ENCODE measurements at regions of chr12 and their contacts with region 1.

Region 1: DNA sequence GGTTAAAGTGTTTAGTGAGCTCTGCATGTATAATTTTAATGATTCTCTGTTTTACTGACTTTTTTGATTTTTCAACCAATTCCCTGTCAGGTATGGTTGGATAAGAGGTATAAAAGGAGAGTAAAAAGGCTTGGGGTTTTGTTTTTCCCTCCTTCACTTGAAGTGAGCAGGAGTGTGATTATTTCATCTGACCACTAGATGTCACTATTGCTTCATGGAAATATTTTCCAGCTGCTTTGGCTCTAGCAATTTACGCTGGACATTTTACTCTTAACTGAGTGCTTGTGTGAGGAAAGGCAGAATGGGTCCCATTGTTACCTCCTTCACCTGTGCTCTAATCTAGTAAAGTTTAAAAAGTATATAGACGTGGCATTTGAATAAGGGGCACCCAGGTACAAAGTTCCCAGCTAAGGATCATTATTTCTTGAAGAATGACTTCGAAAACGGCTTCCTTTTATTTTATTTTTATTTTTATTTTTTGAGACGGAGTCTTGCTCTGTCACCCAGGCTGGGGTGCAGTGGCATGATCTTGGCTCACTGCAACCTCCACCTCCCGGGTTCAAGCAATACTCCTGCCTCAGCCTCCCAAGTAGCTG is 66.5 kb downstream of the TBC1D30 start:
- DNase-seq: no peak
- ATAC-seq: peak; percentile 88

Region 2: DNA sequence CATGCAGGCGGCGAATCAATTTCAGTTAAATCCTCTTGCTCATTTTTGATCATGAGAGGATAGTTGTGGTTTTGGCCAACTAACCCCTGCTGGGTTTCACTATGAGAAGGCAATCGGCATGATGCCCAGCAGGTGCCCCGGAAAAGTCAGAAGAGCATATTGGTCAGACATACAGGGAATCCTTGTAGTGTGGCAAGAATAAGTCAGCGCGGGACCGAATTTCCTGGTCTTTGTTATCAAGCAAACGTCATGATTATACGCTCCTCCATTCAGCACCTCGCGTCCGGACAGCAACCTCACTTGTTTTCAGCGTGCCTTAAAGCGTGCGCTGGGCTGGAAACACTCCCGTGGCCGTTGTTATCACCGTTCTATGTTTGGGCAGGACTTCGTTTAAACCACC is 64.7 kb before region 1 on chr12:
- intact Hi-C with region 1: no loop called
- DNase-seq: peak; percentile 60 to 81
- ATAC-seq: peak; percentile 84

Region 3: DNA sequence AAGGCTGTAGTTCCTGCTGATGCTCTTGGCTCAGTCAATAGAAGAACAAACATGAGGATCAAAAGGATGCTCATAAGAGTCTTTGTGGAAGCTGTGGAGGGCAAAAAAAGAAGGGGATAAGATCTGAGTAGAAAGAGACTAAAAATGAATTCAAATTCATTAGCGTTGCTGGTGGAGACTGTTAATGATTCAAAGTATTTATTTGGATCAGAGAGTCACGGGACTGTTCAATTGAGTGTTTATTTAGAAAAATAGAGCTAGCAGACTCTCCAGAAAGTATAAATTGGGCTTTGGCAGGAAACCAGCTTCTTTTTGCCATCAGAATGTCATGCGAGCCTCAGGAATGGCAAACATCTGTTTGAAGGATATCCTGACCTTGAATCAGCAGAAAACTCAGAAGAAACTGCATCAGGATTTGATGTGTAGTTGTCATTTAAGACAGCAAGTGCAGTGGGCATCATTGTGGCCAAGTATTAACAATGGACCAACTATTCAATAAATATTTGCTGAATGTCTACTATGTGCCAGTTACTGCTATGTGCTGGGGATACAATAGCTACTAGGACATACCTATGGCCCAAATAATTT is 59.8 kb after region 1 on chr12:
- intact Hi-C with region 1: no loop called
- DNase-seq: no peak
- ATAC-seq: no peak

Region 4: GRCh38 chr12:65121049-65121955 is 230.3 kb after region 1 on chr12 and contains the start of gene WIF1:
- intact Hi-C with region 1: loop called in 1 of 2 experiments (anchors 10 kb)
- DNase-seq: peak in 1 of 2 donors; percentile 34
- ATAC-seq: peak; percentile 66
- total RNA-seq, gene WIF1: 0.25 to 0.55 TPM

Region 5: DNA sequence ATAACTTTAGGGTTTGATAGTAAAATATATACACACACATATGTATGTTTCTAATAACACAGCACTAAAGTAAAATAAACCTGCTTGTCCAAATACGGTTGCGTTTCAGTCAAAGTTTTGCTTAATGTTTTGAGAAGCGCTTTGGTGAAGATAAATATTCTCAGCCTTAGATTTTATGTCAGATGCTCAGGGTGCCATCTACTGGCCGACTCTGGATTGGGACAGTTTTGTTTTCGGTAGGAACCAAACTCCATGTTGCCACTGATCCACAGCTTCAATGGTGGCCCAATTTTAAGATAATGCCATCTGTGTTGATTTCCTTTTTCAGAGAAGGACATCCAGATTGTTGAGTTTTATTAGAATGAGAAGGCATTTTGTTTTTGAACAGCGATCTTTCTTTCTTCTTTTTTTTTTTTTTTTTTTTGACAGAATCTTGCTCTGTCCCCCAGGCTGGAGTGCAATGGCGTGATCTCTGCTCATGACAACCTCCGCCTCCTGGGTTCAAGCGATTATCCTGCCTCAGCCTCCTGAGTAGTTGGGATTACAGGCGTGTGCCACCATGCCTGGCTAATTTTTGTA is 1196.5 kb after region 1 on chr12:
- intact Hi-C with region 1: loop called in 1 of 2 experiments (anchors 5 kb)
- DNase-seq: peak; percentile 36 to 73
- ATAC-seq: peak; percentile 71

Measured in left colon (tissue), 2 donors.